GM12878 (cell line): ENCODE measurements at regions of chr7 and their contacts with region 1.

Region 1: GRCh38 chr7:121530227-121531174 is 134.4 kb upstream of the FAM3C start:
- DNase-seq: peak; percentile 99
- ATAC-seq: peak; percentile 98
- H3K4me3 ChIP-seq: no peak overlapping the region
- H3K27ac ChIP-seq: peak overlapping the region; percentile 80
- H3K4me1 ChIP-seq: peaks cover 17% of the 10 kb centered on the region; the same call in 1 of the 2 replicates
- H3K27me3 ChIP-seq: no peaks in the 10 kb centered on the region
- CTCF ChIP-seq: no peak
- EP300 ChIP-seq: peak; percentile 99 to 100
- POLR2A ChIP-seq: no peak
- RAD21 ChIP-seq: no peak

Region 2: GRCh38 chr7:120857588-120858573 is 672.6 kb before region 1 on chr7 and contains the start of gene TSPAN12:
- CTCF ChIA-PET with region 1: no interaction called
- POLR2A ChIA-PET with region 1: no interaction called
- RAD21 ChIA-PET with region 1: no interaction called
- SMC1A ChIA-PET with region 1: no interaction called
- in situ Hi-C with region 1: no loop called
- intact Hi-C with region 1: loop called (anchors 10 kb)
- DNase-seq: no peak
- ATAC-seq: peak; percentile 81
- H3K4me3 ChIP-seq: peak within 1 kb of the TSS; percentile 70
- H3K27ac ChIP-seq: 0 out of 2 replicates have a peak within 1 kb of the TSS, but pooled peaks have one; percentile 46
- H3K4me1 ChIP-seq: no peaks in the 10 kb centered on the region
- H3K27me3 ChIP-seq: peaks cover 0 to 4% of the 10 kb centered on the region in 2 experiments; a peak in 1 of 4 replicates
- CTCF ChIP-seq: peak; percentile 67 to 79 (median 75); a peak in 5 of 6 replicates
- EP300 ChIP-seq: no peak
- POLR2A ChIP-seq: peak; percentile 66
- RAD21 ChIP-seq: peak; percentile 61
- polyA plus RNA-seq, gene TSPAN12: 0.75 to 1.3 TPM

Region 3: DNA sequence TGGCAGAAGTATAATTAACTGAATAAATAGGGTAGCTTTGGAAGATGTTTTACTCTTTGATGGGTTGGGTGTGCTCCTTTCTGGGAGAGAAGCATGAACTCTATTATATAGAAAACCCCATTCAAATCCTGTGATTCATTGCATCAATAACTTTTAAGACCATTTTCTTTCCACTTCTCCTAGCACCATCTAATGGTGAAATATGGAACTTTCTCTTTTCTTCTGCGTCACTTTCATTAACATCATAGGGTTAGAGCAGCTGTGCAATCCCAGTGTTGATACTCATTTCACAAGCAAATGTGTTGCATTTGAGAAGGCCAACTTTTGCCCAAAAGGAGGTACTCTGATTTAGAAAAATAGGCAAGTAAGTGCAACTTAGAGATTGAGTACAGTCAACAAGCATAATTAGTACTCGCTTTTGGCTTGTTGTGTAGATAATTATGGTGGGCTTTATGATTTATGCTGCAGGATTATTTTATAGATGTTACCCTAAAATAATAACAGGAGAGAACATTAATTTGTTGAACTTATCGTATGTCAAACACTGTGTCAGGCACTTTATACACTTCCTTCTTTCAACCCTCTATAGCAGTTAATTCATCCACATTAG is 449.1 kb before region 1 on chr7:
- CTCF ChIA-PET with region 1: no interaction called
- POLR2A ChIA-PET with region 1: no interaction called
- RAD21 ChIA-PET with region 1: no interaction called
- SMC1A ChIA-PET with region 1: no interaction called
- in situ Hi-C with region 1: no loop called
- intact Hi-C with region 1: no loop called
- DNase-seq: peak; percentile 5
- ATAC-seq: peak; percentile 81
- H3K4me3 ChIP-seq: no peak overlapping the region
- H3K27ac ChIP-seq: no peak overlapping the region
- H3K4me1 ChIP-seq: no peaks in the 10 kb centered on the region
- H3K27me3 ChIP-seq: peaks cover 0 to under 1% of the 10 kb centered on the region in 2 experiments; a peak in 2 of 4 replicates
- CTCF ChIP-seq: peak; percentile 57 to 72 (median 57); a peak in 5 of 6 replicates
- EP300 ChIP-seq: no peak
- POLR2A ChIP-seq: no peak
- RAD21 ChIP-seq: peak; percentile 77

Region 4: GRCh38 chr7:121278120-121279021 is 252.1 kb before region 1 on chr7:
- CTCF ChIA-PET with region 1: no interaction called
- POLR2A ChIA-PET with region 1: no interaction called
- RAD21 ChIA-PET with region 1: no interaction called
- SMC1A ChIA-PET with region 1: interaction called, 9 read pairs
- in situ Hi-C with region 1: no loop called
- intact Hi-C with region 1: loop called (anchors 1 kb)
- DNase-seq: peak; percentile 86
- ATAC-seq: peak; percentile 94
- H3K4me3 ChIP-seq: no peak overlapping the region
- H3K27ac ChIP-seq: peak overlapping the region; percentile 64
- H3K4me1 ChIP-seq: peaks cover 13% of the 10 kb centered on the region
- H3K27me3 ChIP-seq: no peaks in the 10 kb centered on the region
- CTCF ChIP-seq: no peak
- EP300 ChIP-seq: peak; percentile 95 to 99
- POLR2A ChIP-seq: no peak
- RAD21 ChIP-seq: no peak

Region 5: DNA sequence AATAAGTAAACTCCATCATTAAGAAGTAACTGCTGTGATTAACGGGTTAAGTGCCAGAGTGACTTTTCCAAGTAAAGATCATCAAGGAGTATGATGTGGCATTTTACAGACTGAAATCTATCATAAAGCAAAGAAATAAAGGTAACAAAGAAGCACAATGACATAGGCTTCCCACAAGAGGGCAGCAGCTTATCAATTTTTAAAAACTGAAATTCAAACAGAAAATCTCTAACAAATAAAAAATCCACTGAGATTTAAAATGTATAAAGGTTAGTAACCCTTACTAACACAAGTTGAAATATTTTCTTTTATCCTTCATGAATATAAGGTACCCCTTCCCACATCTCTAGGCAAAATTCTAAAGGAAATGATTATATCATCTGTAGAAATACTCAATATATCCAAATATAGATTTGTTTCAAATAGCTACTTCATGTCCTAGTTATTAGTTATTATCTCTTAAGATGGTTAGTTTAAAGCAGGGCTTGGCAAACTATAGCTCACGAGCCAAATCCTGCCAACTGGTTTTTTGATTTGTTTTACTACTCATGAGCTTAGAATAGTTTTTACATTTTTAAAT is 163.6 kb before region 1 on chr7:
- CTCF ChIA-PET with region 1: interaction called, 29 read pairs
- POLR2A ChIA-PET with region 1: interaction called, 12 read pairs
- RAD21 ChIA-PET with region 1: interaction called, 61 read pairs
- SMC1A ChIA-PET with region 1: interaction called, 24 read pairs
- in situ Hi-C with region 1: no loop called
- intact Hi-C with region 1: loop called (anchors 1 kb)
- DNase-seq: no peak
- ATAC-seq: peak; percentile 28; the same call in 2 of the 3 replicates
- H3K4me3 ChIP-seq: no peak overlapping the region
- H3K27ac ChIP-seq: no peak overlapping the region
- H3K4me1 ChIP-seq: peaks cover 15% of the 10 kb centered on the region
- H3K27me3 ChIP-seq: no peaks in the 10 kb centered on the region
- CTCF ChIP-seq: peak; percentile 50 to 66 (median 66)
- EP300 ChIP-seq: no peak
- POLR2A ChIP-seq: no peak
- RAD21 ChIP-seq: peak; percentile 86

Region 6: DNA sequence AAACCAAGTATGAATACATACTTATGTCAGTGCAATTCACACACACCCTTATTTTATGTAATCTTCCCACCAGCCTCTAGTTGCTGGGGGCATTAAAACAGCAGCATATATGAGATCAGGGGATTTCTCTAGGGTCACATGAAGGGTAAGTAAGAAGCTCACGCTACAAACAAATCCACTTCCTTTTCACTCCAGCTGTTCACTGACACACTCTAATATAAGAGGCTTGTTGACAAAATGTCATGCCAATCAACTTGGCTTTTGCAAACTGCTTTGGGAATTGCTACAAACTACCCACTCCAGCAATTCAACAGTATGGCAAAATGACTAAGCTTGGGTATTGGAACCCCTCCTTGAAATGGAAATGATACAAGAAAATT is 144.7 kb before region 1 on chr7:
- CTCF ChIA-PET with region 1: interaction called, 13 read pairs
- POLR2A ChIA-PET with region 1: interaction called, 22 read pairs
- RAD21 ChIA-PET with region 1: interaction called, 133 read pairs
- SMC1A ChIA-PET with region 1: interaction called, 56 read pairs
- in situ Hi-C with region 1: no loop called
- intact Hi-C with region 1: loop called (anchors 1 kb)
- DNase-seq: peak; percentile 76
- ATAC-seq: peak; percentile 79
- H3K4me3 ChIP-seq: no peak overlapping the region
- H3K27ac ChIP-seq: peak overlapping the region; percentile 92
- H3K4me1 ChIP-seq: peaks cover 43% of the 10 kb centered on the region
- H3K27me3 ChIP-seq: no peaks in the 10 kb centered on the region
- CTCF ChIP-seq: no peak
- EP300 ChIP-seq: peak; percentile 87 to 94; a peak in 3 of 4 replicates
- POLR2A ChIP-seq: no peak
- RAD21 ChIP-seq: no peak

Region 7: GRCh38 chr7:121440857-121441503 is 89.5 kb before region 1 on chr7:
- CTCF ChIA-PET with region 1: interaction called, 3 read pairs
- POLR2A ChIA-PET with region 1: interaction called, 7 read pairs
- RAD21 ChIA-PET with region 1: interaction called, 11 read pairs
- SMC1A ChIA-PET with region 1: interaction called, 20 read pairs
- in situ Hi-C with region 1: no loop called
- intact Hi-C with region 1: no loop called
- DNase-seq: no peak
- ATAC-seq: peak; percentile 43
- H3K4me3 ChIP-seq: peak overlapping the region; percentile 31; the same call in 1 of the 2 replicates
- H3K27ac ChIP-seq: peak overlapping the region; percentile 58
- H3K4me1 ChIP-seq: 0 out of 2 replicates have a peak, but pooled peaks cover 7% of the 10 kb centered on the region
- H3K27me3 ChIP-seq: no peaks in the 10 kb centered on the region
- CTCF ChIP-seq: no peak
- EP300 ChIP-seq: no peak
- POLR2A ChIP-seq: no peak
- RAD21 ChIP-seq: no peak

Region 8: DNA sequence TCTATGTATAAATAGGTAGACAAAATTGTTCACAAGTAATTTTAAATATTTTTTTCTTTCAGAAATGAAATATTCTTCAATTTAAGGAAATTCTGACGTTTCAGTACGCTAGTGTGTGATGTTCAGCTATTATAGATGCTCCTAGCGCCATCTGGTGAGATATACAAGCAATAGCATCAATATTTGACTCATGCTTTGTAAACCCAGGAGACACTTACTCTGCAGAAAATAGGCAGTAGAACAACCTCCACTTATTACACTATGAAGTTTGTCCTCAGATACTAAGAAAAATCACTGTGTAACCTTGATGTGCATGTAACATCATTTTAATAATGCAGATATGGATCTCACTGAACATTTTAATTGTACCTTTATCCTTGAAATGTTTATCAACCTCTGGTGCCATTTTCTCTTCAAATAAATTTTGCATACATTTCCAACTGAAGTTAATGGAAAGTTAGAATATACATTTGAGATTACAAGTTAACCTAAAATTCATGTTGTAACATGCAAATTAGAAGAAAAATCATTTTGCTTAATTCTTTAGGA is 17.1 kb after region 1 on chr7:
- CTCF ChIA-PET with region 1: interaction called, 11 read pairs
- POLR2A ChIA-PET with region 1: interaction called, 6 read pairs
- RAD21 ChIA-PET with region 1: interaction called, 28 read pairs
- SMC1A ChIA-PET with region 1: interaction called, 35 read pairs
- in situ Hi-C with region 1: no loop called
- intact Hi-C with region 1: loop called (anchors 1 kb)
- DNase-seq: no peak
- ATAC-seq: peak; percentile 89
- H3K4me3 ChIP-seq: no peak overlapping the region
- H3K27ac ChIP-seq: no peak overlapping the region
- H3K4me1 ChIP-seq: no peaks in the 10 kb centered on the region
- H3K27me3 ChIP-seq: no peaks in the 10 kb centered on the region
- CTCF ChIP-seq: peak; percentile 60 to 85 (median 64); a peak in 5 of 6 replicates
- EP300 ChIP-seq: no peak
- POLR2A ChIP-seq: no peak
- RAD21 ChIP-seq: peak; percentile 98

Region 9: GRCh38 chr7:121575194-121575765 is 44.8 kb after region 1 on chr7:
- CTCF ChIA-PET with region 1: no interaction called
- POLR2A ChIA-PET with region 1: no interaction called
- RAD21 ChIA-PET with region 1: no interaction called
- SMC1A ChIA-PET with region 1: no interaction called
- in situ Hi-C with region 1: no loop called
- intact Hi-C with region 1: no loop called
- DNase-seq: no peak
- ATAC-seq: no peak
- H3K4me3 ChIP-seq: no peak overlapping the region
- H3K27ac ChIP-seq: no peak overlapping the region
- H3K4me1 ChIP-seq: no peaks in the 10 kb centered on the region
- H3K27me3 ChIP-seq: peaks cover 0 to 4% of the 10 kb centered on the region in 2 experiments; a peak in 1 of 4 replicates
- CTCF ChIP-seq: no peak
- EP300 ChIP-seq: no peak
- POLR2A ChIP-seq: no peak
- RAD21 ChIP-seq: no peak